Activated CD8-positive, alpha-beta T cell treated with anti-CD3 and anti-CD28 coated beads for 36 hours (primary cell): ENCODE measurements at regions of chr12 and their contacts with region 1.

Region 1: GRCh38 chr12:6944381-6945186 is 762 bp downstream of the C12orf57 start:
- DNase-seq: peak; percentile 94
- ATAC-seq: peak; percentile 46
- H3K4me3 Mint-ChIP-seq: peak overlapping the region; percentile 85
- H3K27ac Mint-ChIP-seq: peak overlapping the region; percentile 93
- H3K4me1 Mint-ChIP-seq: peaks cover 57% of the 10 kb centered on the region
- H3K27me3 Mint-ChIP-seq: no peaks in the 10 kb centered on the region
- CTCF ChIP-seq: peak; percentile 88

Region 2: GRCh38 chr12:6867413-6868210 is 77.0 kb before region 1 on chr12 and contains the start of gene TPI1:
- CTCF ChIA-PET with region 1: interaction called, 26 read pairs
- POLR2A ChIA-PET with region 1: interaction called, 32 read pairs
- intact Hi-C with region 1: no loop called
- DNase-seq: peak; percentile 84
- ATAC-seq: peak; percentile 74
- H3K4me3 Mint-ChIP-seq: peak within 1 kb of the TSS; percentile 91
- H3K27ac Mint-ChIP-seq: peak within 1 kb of the TSS; percentile 97
- H3K4me1 Mint-ChIP-seq: peaks cover 55% of the 10 kb centered on the region
- H3K27me3 Mint-ChIP-seq: no peaks in the 10 kb centered on the region
- CTCF ChIP-seq: no peak
- total RNA-seq, gene TPI1: 1,714 to 1,776 TPM

Region 3: DNA sequence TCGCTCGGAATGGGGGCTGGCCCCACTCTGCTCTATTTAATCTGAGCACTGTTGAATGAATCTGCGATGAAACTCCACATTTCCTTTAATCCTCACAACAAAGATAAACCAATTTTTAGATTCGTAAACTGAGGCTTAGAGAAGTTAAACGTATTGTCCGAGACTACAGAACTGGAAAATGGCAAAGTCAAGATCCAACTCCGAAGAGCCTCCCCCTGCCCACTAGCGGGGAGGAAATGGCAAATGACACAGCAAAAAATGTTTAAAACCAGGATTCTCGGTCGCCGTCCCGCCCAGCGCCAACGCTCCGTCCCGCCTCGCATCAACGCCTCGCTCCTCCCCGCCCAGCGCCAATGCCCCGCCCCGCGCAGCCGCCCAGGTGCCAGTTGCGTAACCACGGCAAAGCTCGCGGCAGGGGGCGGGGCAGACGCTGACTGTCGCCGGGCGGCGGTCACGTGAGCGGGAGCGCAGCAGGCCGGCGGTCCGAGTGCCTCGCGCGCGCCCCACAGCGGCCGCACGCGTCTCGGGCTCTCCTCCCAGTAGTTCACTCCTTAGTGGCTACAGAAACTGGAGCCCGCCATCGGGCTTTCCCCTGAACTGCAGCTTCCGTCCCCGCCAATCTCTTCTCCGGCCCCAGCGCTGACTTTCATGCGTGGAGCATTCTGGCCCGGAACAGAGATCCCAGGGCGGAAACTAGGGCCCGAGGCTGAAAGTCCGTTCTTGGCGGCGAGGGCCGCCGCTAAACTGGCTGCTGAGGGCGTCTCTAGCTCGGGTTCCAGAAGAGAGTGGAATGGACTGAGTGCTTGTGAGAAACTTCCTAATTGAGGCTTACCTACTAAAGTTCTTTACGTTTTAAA is 53.6 kb before region 1 on chr12:
- CTCF ChIA-PET with region 1: no interaction called
- POLR2A ChIA-PET with region 1: interaction called, 10 read pairs
- intact Hi-C with region 1: no loop called
- DNase-seq: peak; percentile 99
- ATAC-seq: peak; percentile 95
- H3K4me3 Mint-ChIP-seq: peak overlapping the region; percentile 73
- H3K27ac Mint-ChIP-seq: peak overlapping the region; percentile 91
- H3K4me1 Mint-ChIP-seq: peaks cover 16% of the 10 kb centered on the region
- H3K27me3 Mint-ChIP-seq: no peaks in the 10 kb centered on the region
- CTCF ChIP-seq: peak; percentile 81

Region 4: DNA sequence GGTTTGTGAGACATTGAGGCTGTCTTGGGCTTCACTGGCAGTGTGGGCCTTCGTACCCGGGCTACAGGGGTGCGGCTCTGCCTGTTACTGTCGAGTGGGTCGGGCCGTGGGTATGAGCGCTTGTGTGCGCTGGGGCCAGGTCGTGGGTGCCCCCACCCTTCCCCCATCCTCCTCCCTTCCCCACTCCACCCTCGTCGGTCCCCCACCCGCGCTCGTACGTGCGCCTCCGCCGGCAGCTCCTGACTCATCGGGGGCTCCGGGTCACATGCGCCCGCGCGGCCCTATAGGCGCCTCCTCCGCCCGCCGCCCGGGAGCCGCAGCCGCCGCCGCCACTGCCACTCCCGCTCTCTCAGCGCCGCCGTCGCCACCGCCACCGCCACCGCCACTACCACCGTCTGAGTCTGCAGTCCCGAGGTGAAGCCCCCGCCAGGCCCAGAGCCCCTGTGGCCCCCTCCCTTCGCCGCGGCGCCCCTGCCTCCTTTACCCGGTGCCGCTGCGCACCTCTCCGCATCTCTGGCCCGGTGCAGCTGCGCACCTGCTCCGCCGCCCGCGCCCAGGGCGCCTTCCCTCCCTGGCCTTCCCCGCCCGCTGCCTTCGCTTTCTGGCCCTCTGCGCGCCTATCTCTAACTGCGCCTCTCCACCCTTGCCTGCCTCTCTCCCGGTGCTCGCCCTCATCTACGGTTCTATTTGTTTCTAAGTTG is 30.2 kb before region 1 on chr12 and contains the start of gene ENO2:
- CTCF ChIA-PET with region 1: interaction called, 4 read pairs
- POLR2A ChIA-PET with region 1: interaction called, 62 read pairs
- intact Hi-C with region 1: no loop called
- DNase-seq: peak; percentile 88
- ATAC-seq: peak; percentile 91
- H3K4me3 Mint-ChIP-seq: peak within 1 kb of the TSS; percentile 95
- H3K27ac Mint-ChIP-seq: peak within 1 kb of the TSS; percentile 90
- H3K4me1 Mint-ChIP-seq: peaks cover 35% of the 10 kb centered on the region
- H3K27me3 Mint-ChIP-seq: no peaks in the 10 kb centered on the region
- CTCF ChIP-seq: no peak
- total RNA-seq, gene ENO2: 315 to 330 TPM

Region 5: DNA sequence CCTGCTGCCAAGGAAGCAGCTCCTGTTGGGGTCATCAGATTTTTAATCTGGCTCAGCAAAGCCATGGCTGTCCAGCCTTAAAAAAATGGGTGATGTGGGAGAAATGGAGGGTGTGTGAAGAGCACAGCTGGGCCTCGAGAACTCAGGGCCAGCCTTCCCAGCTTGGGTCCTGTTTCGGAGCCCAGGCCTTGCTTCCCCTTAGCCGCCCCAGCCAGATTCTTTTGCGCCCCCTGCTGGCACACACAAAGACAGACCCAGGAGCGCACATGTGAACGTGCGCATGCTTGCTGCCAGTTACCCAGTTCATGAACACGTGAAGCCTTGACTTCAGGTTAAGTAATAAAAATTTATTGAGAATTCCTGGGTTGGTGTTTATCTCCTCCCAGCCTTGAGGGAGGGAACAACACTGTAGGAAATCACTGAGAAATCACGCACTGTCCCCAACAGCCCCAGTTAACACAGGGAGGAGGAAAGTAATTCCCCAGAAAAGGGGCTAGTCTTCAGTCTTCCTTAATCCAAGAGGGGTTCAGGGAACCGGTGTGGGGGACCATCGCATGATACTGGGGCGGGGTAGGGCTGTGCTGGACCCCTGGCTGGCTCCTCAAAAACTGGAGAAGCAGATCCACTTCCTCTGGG is 20.6 kb after region 1 on chr12:
- CTCF ChIA-PET with region 1: interaction called, 460 read pairs
- POLR2A ChIA-PET with region 1: interaction called, 1,266 read pairs
- intact Hi-C with region 1: loop called (anchors 2 kb)
- DNase-seq: peak; percentile 92
- ATAC-seq: peak; percentile 35
- H3K4me3 Mint-ChIP-seq: peak overlapping the region; percentile 0
- H3K27ac Mint-ChIP-seq: peak overlapping the region; percentile 91
- H3K4me1 Mint-ChIP-seq: peaks cover 76% of the 10 kb centered on the region
- H3K27me3 Mint-ChIP-seq: no peaks in the 10 kb centered on the region
- CTCF ChIP-seq: peak; percentile 95

Region 6: DNA sequence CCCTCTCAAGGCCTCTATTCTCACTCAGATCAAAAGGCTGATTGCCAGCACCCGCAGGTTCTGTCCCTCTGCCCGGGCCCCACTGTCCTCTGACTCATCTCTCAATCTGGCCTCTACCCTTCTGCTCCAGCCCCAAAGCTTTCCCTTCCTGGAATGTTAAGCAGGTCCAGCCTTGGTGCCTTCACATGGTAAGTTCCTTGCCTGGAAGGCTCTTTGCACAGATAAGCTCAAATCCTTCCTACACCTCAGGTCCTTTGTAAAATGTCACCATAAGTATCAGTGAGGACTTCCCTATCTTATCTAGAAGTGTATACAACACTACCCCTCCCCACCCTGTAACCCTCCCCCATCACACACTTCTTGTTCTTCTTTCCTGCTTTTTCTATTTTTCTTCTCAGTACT is 51.5 kb after region 1 on chr12:
- CTCF ChIA-PET with region 1: no interaction called
- POLR2A ChIA-PET with region 1: no interaction called
- intact Hi-C with region 1: no loop called
- DNase-seq: no peak
- ATAC-seq: no peak
- H3K4me3 Mint-ChIP-seq: no peak overlapping the region
- H3K27ac Mint-ChIP-seq: no peak overlapping the region
- H3K4me1 Mint-ChIP-seq: peaks cover 1% of the 10 kb centered on the region
- H3K27me3 Mint-ChIP-seq: no peaks in the 10 kb centered on the region
- CTCF ChIP-seq: no peak

Region 7: DNA sequence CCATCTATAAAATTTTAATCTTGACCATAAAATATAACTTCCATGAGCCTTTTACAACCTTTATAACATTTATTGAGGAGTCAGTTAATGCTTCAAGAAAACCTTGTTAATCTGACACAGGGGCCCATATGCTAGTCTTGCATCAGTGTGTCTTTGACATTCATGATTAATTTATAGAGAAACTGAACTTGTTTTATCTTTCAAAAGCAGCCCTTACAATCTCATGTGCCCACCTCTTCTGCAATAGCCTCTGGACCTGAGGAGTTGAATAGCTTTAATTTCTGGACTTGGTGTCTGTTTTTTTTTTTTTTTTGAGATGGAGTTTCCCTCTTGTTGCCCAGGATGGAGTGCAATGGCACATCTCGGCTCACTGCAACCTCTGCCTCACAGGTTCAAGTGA is 82.3 kb after region 1 on chr12:
- CTCF ChIA-PET with region 1: no interaction called
- POLR2A ChIA-PET with region 1: no interaction called
- intact Hi-C with region 1: no loop called
- DNase-seq: no peak
- ATAC-seq: no peak
- H3K4me3 Mint-ChIP-seq: no peak overlapping the region
- H3K27ac Mint-ChIP-seq: no peak overlapping the region
- H3K4me1 Mint-ChIP-seq: no peaks in the 10 kb centered on the region
- H3K27me3 Mint-ChIP-seq: no peaks in the 10 kb centered on the region
- CTCF ChIP-seq: no peak

Region 8: GRCh38 chr12:7073946-7074345 is 129.4 kb after region 1 on chr12:
- CTCF ChIA-PET with region 1: no interaction called
- POLR2A ChIA-PET with region 1: no interaction called
- intact Hi-C with region 1: no loop called
- DNase-seq: no peak
- ATAC-seq: no peak
- H3K4me3 Mint-ChIP-seq: no peak overlapping the region
- H3K27ac Mint-ChIP-seq: no peak overlapping the region
- H3K4me1 Mint-ChIP-seq: no peaks in the 10 kb centered on the region
- H3K27me3 Mint-ChIP-seq: no peaks in the 10 kb centered on the region
- CTCF ChIP-seq: no peak

Region 9: GRCh38 chr12:7092229-7092985 is 147.8 kb after region 1 on chr12 and contains the start of gene C1R:
- CTCF ChIA-PET with region 1: interaction called, 4 read pairs
- POLR2A ChIA-PET with region 1: interaction called, 14 read pairs
- intact Hi-C with region 1: no loop called
- DNase-seq: peak; percentile 81
- ATAC-seq: peak; percentile 86
- H3K4me3 Mint-ChIP-seq: peak within 1 kb of the TSS; percentile 75
- H3K27ac Mint-ChIP-seq: peak within 1 kb of the TSS; percentile 77
- H3K4me1 Mint-ChIP-seq: peaks cover 6% of the 10 kb centered on the region
- H3K27me3 Mint-ChIP-seq: no peaks in the 10 kb centered on the region
- CTCF ChIP-seq: peak; percentile 91
- total RNA-seq, gene C1R: 0.97 to 2.4 TPM